Colonic mucosa (tissue), 4 donors: ENCODE measurements at regions of chr17 and their contacts with region 1.

Region 1: GRCh38 chr17:81142301-81143199 is 22.8 kb upstream of the PVALEF start:
- DNase-seq: peak; percentile 80
- H3K4me3 ChIP-seq: no peak overlapping the region
- H3K27ac ChIP-seq: no peak overlapping the region
- H3K4me1 ChIP-seq: no peaks in the 10 kb centered on the region
- H3K27me3 ChIP-seq: no peaks in the 10 kb centered on the region
- CTCF ChIP-seq: peak; percentile 46

Region 2: DNA sequence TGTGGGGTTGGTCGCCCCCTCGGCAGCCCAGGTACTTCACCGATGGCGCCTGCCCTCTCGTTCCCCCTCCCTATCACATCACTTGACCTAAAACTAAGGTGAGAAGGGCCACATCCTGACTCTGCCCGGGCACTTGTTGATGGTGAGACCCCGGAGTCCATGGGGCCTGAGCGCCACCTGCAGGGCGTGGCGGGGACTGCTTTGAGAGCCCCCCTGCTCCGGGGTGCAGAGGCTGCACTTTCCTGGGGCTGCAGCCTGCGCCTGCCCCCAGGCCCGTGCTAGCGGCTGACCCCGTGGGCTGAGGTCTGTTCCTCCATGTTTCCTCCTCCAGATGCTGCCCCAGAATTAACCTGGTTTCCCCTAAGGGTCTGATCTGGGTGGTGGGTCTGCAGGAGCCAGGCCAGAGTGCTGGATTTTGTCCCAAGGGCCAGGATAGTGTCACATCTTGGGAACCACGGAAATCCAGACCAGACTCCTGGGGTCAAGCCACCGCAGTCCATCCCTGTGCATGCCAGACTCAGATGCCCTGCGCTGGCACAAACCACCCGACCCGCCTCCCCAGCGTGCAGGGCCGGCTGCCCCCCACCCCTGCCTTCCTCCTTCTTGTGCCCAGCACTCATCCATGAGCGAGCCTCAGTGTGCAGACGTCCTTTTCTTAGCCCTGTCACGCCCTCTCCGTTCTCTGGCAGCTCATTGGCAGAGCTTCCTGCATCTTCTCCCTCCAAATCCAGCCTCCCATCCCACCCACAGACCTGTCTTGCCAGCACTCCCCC is 99.3 kb after region 1 on chr17:
- intact Hi-C with region 1: loop called (anchors 2 kb)
- DNase-seq: no peak
- H3K4me3 ChIP-seq: no peak overlapping the region
- H3K27ac ChIP-seq: no peak overlapping the region
- H3K4me1 ChIP-seq: peaks cover 13% of the 10 kb centered on the region
- H3K27me3 ChIP-seq: no peaks in the 10 kb centered on the region
- CTCF ChIP-seq: peak; percentile 68

Region 3: DNA sequence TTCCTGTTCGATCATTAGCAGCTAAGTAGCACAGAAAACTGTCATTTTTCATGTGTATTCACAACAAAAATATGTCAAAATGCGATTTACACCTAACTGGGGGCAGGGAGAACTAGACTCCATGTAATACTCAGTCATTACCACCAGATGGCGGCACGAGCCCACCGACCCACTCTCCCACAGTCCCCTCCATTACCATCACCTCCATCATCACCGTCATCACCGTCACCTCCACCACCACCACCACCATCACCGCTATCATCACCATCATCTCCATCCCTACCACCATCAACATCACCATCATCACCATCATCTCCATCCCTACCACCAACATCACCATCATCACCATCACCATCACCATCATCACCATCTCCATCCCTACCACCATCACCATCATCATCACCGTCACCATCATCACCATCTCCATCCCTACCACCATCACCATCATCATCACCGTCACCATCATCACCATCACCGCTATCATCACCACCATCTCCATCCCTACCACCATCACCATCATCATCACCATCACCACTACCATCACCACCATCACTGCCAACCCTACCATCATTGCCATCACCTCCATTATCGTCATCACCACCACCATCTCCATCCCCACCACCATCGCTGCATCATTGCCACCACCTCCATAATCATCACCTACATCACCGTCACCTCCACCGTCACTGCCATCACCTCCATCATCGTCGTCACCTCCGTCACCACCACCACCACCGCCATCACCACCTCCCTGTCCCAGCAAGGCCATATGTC is 111.0 kb after region 1 on chr17:
- intact Hi-C with region 1: no loop called
- DNase-seq: peak; percentile 55
- H3K4me3 ChIP-seq: no peak overlapping the region
- H3K27ac ChIP-seq: no peak overlapping the region
- H3K4me1 ChIP-seq: peaks cover 41% of the 10 kb centered on the region
- H3K27me3 ChIP-seq: no peaks in the 10 kb centered on the region
- CTCF ChIP-seq: peak; percentile 70

Region 4: GRCh38 chr17:81309070-81309905 is 166.7 kb after region 1 on chr17:
- intact Hi-C with region 1: no loop called
- DNase-seq: peak; percentile 97
- H3K4me3 ChIP-seq: peak overlapping the region; percentile 42
- H3K27ac ChIP-seq: peak overlapping the region; percentile 62
- H3K4me1 ChIP-seq: peaks cover 8% of the 10 kb centered on the region
- H3K27me3 ChIP-seq: no peaks in the 10 kb centered on the region
- CTCF ChIP-seq: peak; percentile 37